MCF 10A (cell line): ENCODE measurements at regions of chr3 and their contacts with region 1.

Region 1: GRCh38 chr3:183385698-183386613 is 42.5 kb downstream of the MCF2L2 start:
- DNase-seq: peak; percentile 78
- H3K4me3 Mint-ChIP-seq: no peak overlapping the region
- H3K27ac Mint-ChIP-seq: no peak overlapping the region
- H3K4me1 Mint-ChIP-seq: peaks cover 18% of the 10 kb centered on the region
- H3K27me3 Mint-ChIP-seq: no peaks in the 10 kb centered on the region
- CTCF ChIP-seq: peak; percentile 77

Region 2: DNA sequence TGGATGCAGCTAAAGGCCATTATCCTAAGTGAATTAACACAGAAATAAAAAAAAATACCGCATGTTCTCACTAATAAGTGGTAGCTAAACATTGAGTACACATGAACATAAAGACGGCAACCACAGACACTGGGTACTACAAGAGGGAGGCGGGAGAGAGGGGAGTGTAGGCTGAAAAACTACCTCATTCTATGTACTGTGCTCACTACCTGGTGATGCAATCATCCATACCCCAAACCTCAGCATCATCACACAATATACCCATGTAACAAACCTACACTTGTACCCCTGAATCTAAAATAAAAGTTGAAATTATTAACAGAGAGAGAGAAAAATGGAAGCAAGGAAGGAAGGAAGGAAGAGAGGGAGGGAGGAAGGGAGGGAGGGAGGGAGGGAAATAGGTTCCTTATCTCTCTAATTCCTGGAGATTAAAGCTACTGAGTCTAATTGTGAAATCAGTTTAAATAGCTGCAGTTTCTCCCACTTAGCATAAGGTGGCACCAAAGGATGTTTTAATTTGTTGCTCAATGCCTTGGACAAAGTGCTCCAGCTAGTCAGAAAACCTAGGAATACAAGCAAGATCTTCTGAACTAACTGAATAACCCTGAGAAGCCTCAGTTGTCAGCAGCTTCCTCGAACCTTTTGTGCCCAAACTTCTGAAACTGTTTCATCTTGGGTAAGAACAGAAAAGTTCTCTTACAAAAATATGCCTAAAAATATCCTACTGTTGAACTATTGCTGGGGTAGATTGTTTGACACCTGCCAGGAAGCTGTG is 672.0 kb before region 1 on chr3:
- CTCF ChIA-PET with region 1: no interaction called
- POLR2A ChIA-PET with region 1: no interaction called
- intact Hi-C with region 1: loop called (anchors 2 kb)
- DNase-seq: peak; percentile 77
- H3K4me3 Mint-ChIP-seq: no peak overlapping the region
- H3K27ac Mint-ChIP-seq: no peak overlapping the region
- H3K4me1 Mint-ChIP-seq: no peaks in the 10 kb centered on the region
- H3K27me3 Mint-ChIP-seq: no peaks in the 10 kb centered on the region
- CTCF ChIP-seq: peak; percentile 68

Region 3: DNA sequence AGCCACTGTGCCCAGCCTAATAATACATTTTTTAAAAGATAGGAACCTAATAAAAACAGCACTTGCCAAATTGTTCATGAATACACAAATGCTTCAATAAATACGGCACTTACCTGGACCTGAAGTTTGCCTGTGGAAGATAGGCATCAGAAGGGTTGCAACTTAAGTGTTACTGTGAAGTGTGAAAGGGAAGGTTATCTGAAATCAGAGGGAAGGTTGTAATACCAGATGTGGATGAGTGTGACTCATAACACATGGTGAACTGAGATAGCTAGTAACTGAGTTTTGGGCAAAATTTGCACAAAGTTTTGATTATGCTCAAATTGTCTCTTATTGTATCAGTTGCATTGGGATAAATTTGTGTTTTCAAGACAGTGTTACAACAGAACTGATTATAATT is 524.6 kb before region 1 on chr3:
- CTCF ChIA-PET with region 1: no interaction called
- POLR2A ChIA-PET with region 1: no interaction called
- intact Hi-C with region 1: no loop called
- DNase-seq: no peak
- H3K4me3 Mint-ChIP-seq: no peak overlapping the region
- H3K27ac Mint-ChIP-seq: no peak overlapping the region
- H3K4me1 Mint-ChIP-seq: no peaks in the 10 kb centered on the region
- H3K27me3 Mint-ChIP-seq: no peaks in the 10 kb centered on the region
- CTCF ChIP-seq: no peak

Region 4: GRCh38 chr3:183122257-183122932 is 263.6 kb before region 1 on chr3:
- CTCF ChIA-PET with region 1: interaction called, 44 read pairs
- POLR2A ChIA-PET with region 1: interaction called, 4 read pairs
- intact Hi-C with region 1: loop called (anchors 1 kb)
- DNase-seq: peak; percentile 59
- H3K4me3 Mint-ChIP-seq: no peak overlapping the region
- H3K27ac Mint-ChIP-seq: no peak overlapping the region
- H3K4me1 Mint-ChIP-seq: no peaks in the 10 kb centered on the region
- H3K27me3 Mint-ChIP-seq: peaks cover 12% of the 10 kb centered on the region
- CTCF ChIP-seq: peak; percentile 57

Region 5: GRCh38 chr3:183178629-183179549 is 207.1 kb before region 1 on chr3:
- CTCF ChIA-PET with region 1: interaction called, 383 read pairs
- POLR2A ChIA-PET with region 1: interaction called, 86 read pairs
- intact Hi-C with region 1: loop called (anchors 1 kb)
- DNase-seq: peak; percentile 61
- H3K4me3 Mint-ChIP-seq: peak overlapping the region; percentile 71
- H3K27ac Mint-ChIP-seq: no peak overlapping the region
- H3K4me1 Mint-ChIP-seq: peaks cover 5% of the 10 kb centered on the region
- H3K27me3 Mint-ChIP-seq: peaks cover 43% of the 10 kb centered on the region
- CTCF ChIP-seq: no peak

Region 6: DNA sequence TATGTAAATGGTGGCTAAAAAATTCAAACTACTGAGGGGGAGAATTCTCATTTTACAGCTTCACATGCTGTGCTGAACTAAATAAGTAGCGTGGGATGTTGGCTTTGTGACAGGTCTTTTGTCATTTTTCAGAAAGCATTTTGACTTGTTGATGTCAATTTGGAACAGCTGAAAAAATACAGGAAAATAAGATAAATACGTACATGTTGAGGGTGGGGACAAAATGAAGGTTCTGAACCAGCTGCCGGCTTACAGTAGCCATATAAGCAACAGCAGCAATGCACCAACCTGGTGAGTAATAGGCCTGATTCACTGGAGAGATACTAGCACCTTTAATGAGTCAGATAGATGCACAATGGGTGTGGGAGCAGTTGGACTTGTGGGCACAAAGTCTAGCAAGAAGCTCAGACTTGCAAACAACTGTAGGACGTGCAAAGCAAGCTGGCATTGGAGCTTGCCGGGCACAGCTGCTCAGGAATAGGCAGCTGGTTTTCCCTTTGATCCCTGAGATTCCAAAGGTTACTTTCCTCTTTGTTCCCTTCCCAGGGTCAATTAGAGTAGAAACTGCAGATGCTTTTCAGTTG is 120.0 kb before region 1 on chr3:
- CTCF ChIA-PET with region 1: interaction called, 5 read pairs
- POLR2A ChIA-PET with region 1: interaction called, 16 read pairs
- intact Hi-C with region 1: no loop called
- DNase-seq: peak; percentile 96
- H3K4me3 Mint-ChIP-seq: no peak overlapping the region
- H3K27ac Mint-ChIP-seq: no peak overlapping the region
- H3K4me1 Mint-ChIP-seq: peaks cover 24% of the 10 kb centered on the region
- H3K27me3 Mint-ChIP-seq: no peaks in the 10 kb centered on the region
- CTCF ChIP-seq: no peak

Region 7: GRCh38 chr3:183328823-183329222 is 57.1 kb before region 1 on chr3:
- CTCF ChIA-PET with region 1: interaction called, 6 read pairs
- POLR2A ChIA-PET with region 1: interaction called, 3 read pairs
- intact Hi-C with region 1: loop called (anchors 1 kb)
- DNase-seq: peak; percentile 46
- H3K4me3 Mint-ChIP-seq: no peak overlapping the region
- H3K27ac Mint-ChIP-seq: peak overlapping the region; percentile 50
- H3K4me1 Mint-ChIP-seq: peaks cover 32% of the 10 kb centered on the region
- H3K27me3 Mint-ChIP-seq: no peaks in the 10 kb centered on the region
- CTCF ChIP-seq: no peak

Region 8: DNA sequence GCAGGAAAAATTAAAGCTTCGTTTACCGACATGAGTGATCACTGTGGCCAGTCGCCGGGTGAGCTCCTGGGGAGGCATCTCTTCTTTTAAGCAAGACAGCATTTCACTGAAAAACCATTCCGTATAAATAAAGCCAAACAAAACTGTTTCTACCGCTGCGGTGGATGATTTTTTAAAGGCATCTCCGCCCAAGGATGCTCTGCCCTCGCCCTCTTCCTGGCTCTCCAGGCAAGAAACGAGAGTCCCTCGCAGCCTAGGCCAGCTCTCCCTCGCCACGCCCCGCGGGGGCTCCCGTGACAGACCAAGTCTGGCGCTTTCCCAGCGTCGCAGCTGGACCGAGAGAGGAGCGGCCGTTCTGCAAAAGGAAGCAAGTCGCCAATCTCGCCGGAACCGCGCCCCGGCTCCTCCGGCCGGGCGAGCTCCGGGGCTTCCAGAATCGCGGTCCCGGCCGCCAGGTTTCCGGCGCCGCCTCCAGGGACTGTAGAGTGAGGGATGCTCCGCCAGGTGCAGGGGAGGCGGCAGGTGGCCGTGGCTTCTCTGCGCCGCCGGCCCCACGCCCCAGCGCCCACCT is 42.0 kb after region 1 on chr3:
- CTCF ChIA-PET with region 1: no interaction called
- POLR2A ChIA-PET with region 1: no interaction called
- intact Hi-C with region 1: no loop called
- DNase-seq: peak; percentile 33
- H3K4me3 Mint-ChIP-seq: peak overlapping the region; percentile 71
- H3K27ac Mint-ChIP-seq: no peak overlapping the region
- H3K4me1 Mint-ChIP-seq: no peaks in the 10 kb centered on the region
- H3K27me3 Mint-ChIP-seq: peaks cover 12% of the 10 kb centered on the region
- CTCF ChIP-seq: no peak

Region 9: GRCh38 chr3:183438735-183439134 is 52.8 kb after region 1 on chr3:
- CTCF ChIA-PET with region 1: no interaction called
- POLR2A ChIA-PET with region 1: no interaction called
- intact Hi-C with region 1: no loop called
- DNase-seq: no peak
- H3K4me3 Mint-ChIP-seq: no peak overlapping the region
- H3K27ac Mint-ChIP-seq: no peak overlapping the region
- H3K4me1 Mint-ChIP-seq: peaks cover 7% of the 10 kb centered on the region
- H3K27me3 Mint-ChIP-seq: peaks cover 20% of the 10 kb centered on the region
- CTCF ChIP-seq: no peak